PC-9 (cell line): ENCODE measurements at regions of chr2 and their contacts with region 1.

Region 1: GRCh38 chr2:18520451-18521425 is 39.7 kb downstream of the RDH14 start:
- DNase-seq: peak; percentile 56 to 73
- H3K4me3 ChIP-seq: no peak overlapping the region
- H3K27ac ChIP-seq: no peak overlapping the region
- H3K4me1 ChIP-seq: 0 out of 2 replicates have a peak, but pooled peaks cover 12% of the 10 kb centered on the region
- H3K27me3 ChIP-seq: no peaks in the 10 kb centered on the region
- CTCF ChIP-seq: peak; percentile 97

Region 2: GRCh38 chr2:18387441-18388206 is 133.1 kb before region 1 on chr2:
- CTCF ChIA-PET with region 1: no interaction called
- POLR2A ChIA-PET with region 1: no interaction called
- intact Hi-C with region 1: loop called (anchors 5 kb)
- DNase-seq: peak; percentile 55 to 70
- H3K4me3 ChIP-seq: no peak overlapping the region
- H3K27ac ChIP-seq: no peak overlapping the region
- H3K4me1 ChIP-seq: no peaks in the 10 kb centered on the region
- H3K27me3 ChIP-seq: no peaks in the 10 kb centered on the region
- CTCF ChIP-seq: peak; percentile 98

Region 3: DNA sequence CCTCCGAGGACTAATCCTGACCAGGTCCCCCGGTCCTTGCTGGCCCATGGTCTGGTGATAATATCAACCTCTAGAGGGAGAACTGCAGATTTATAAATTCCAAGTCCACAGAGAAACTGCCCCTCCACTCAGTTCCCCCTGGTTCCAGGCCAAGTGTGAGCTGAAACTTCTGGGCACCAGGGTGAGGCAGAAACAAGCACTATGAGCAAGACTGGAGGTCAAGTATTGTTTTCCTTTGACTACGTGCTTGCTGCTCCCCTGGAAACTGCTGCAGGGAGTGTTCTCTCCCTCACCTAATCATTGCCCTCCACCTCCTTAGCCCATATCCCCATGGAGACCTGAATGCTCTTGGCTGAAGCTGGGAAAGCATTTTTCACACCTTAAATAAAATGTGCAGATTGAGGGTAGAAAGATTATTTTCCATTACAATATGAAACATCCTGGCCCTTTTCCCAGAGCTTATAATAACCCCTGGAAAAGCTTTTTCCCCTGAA is 95.5 kb before region 1 on chr2:
- CTCF ChIA-PET with region 1: interaction called, 12 read pairs
- POLR2A ChIA-PET with region 1: no interaction called
- intact Hi-C with region 1: no loop called
- DNase-seq: no peak
- H3K4me3 ChIP-seq: no peak overlapping the region
- H3K27ac ChIP-seq: no peak overlapping the region
- H3K4me1 ChIP-seq: no peaks in the 10 kb centered on the region
- H3K27me3 ChIP-seq: no peaks in the 10 kb centered on the region
- CTCF ChIP-seq: no peak

Region 4: GRCh38 chr2:19377717-19378116 is 857.0 kb after region 1 on chr2:
- CTCF ChIA-PET with region 1: no interaction called
- POLR2A ChIA-PET with region 1: interaction called, 14 read pairs
- intact Hi-C with region 1: no loop called
- DNase-seq: no peak
- H3K4me3 ChIP-seq: no peak overlapping the region
- H3K27ac ChIP-seq: no peak overlapping the region
- H3K4me1 ChIP-seq: peaks cover 21% of the 10 kb centered on the region
- H3K27me3 ChIP-seq: no peaks in the 10 kb centered on the region
- CTCF ChIP-seq: no peak

Region 5: DNA sequence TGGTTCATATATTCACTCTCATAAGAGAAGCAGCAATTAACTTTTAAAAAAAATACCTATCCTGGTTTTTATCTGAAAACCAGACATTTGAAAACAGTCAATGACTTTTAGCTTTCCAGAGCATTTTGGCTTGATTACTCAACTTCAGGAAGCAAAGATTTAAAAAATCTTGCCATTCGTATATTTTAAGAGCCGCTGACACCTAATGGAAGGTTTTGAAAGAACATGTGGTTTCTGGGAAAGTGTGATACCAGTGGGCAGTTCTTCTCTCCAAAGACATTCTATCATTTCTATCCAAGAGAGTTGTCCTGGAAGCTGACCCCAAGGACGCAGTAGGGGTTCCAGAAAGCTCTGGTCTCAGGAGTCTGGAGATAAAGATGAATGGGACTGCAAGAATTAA is 1146.3 kb after region 1 on chr2:
- CTCF ChIA-PET with region 1: no interaction called
- POLR2A ChIA-PET with region 1: no interaction called
- intact Hi-C with region 1: loop called (anchors 5 kb)
- DNase-seq: no peak
- H3K4me3 ChIP-seq: no peak overlapping the region
- H3K27ac ChIP-seq: 0 out of 2 replicates have a peak overlapping the region, but pooled peaks have one; percentile 8
- H3K4me1 ChIP-seq: peaks cover 10% of the 10 kb centered on the region
- H3K27me3 ChIP-seq: no peaks in the 10 kb centered on the region
- CTCF ChIP-seq: peak; percentile 63; the same call in 1 of the 2 replicates